Left cardiac atrium (tissue), 4 donors: ENCODE measurements at regions of chr10 and their contacts with region 1.

Region 1: GRCh38 chr10:113441220-113441619 is 111.6 kb upstream of the HABP2 start:
- DNase-seq: no peak
- ATAC-seq: no peak

Region 2: GRCh38 chr10:113563306-113564088 is 122.3 kb after region 1 on chr10:
- intact Hi-C with region 1: loop called in 1 of 2 experiments (anchors 10 kb)
- DNase-seq: peak; percentile 78
- ATAC-seq: peak; percentile 92

Region 3: GRCh38 chr10:113704637-113705343 is 263.6 kb after region 1 on chr10:
- intact Hi-C with region 1: no loop called
- DNase-seq: no peak
- ATAC-seq: peak; percentile 40 to 44